Aorta (tissue), 5 donors: ENCODE measurements at regions of chr1 and their contacts with region 1.

Region 1: GRCh38 chr1:156456622-156457465 is 43.7 kb downstream of the MEF2D start:
- DNase-seq: peak; percentile 99
- ATAC-seq: peak; percentile 96
- H3K4me3 ChIP-seq: peak overlapping the region; percentile 1 to 41
- H3K27ac ChIP-seq: peak overlapping the region; percentile 93 to 94
- H3K4me1 ChIP-seq: no peaks in the 10 kb centered on the region
- H3K27me3 ChIP-seq: no peaks in the 10 kb centered on the region

Region 2: DNA sequence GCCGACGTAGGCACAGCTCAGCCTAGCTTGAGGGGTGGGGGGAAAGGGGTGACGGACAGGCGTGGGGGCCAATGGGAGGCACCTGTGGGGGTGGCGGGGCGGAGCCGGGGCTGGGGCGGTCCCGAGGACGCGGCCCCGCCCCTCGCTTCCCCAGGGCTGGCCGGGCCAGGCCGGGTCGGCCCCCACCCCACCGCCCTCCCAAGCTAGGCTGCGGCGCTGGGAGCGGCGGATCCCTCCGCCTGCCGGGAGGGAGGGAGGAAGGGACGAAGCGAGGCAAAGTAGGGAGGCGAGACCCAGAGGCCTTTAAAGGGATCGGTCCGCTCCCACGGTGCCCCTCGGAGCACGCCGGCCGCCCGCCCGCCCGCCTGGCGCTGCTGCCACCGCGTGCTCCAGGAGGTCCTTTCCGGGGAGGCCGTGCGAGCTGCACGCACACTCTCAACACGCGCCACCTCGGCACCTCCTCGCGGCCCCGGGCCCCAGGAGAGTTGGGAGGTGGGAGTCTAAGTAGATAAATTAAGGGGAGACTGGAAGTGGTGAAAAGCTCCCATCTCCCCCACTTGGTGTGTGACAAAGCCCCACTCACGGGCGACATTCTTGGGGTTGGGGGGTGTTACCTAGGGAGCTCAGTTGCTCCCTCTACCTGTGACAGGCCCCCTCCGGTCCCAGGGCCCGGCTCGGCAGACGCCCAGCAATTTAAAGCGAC is 44.1 kb after region 1 on chr1:
- intact Hi-C with region 1: loop called (anchors 2 to 5 kb)
- DNase-seq: peak; percentile 96 to 98
- ATAC-seq: peak; percentile 92
- H3K4me3 ChIP-seq: peak overlapping the region; percentile 49 to 73
- H3K27ac ChIP-seq: peak overlapping the region; percentile 96 to 98
- H3K4me1 ChIP-seq: peaks cover 3 to 10% of the 10 kb centered on the region in 2 donors
- H3K27me3 ChIP-seq: no peaks in the 10 kb centered on the region

Region 3: GRCh38 chr1:156608036-156608674 is 151.3 kb after region 1 on chr1:
- intact Hi-C with region 1: loop called (anchors 2 kb)
- DNase-seq: peak in 1 of 2 donors; percentile 40
- ATAC-seq: peak; percentile 87
- H3K4me3 ChIP-seq: no peak overlapping the region
- H3K27ac ChIP-seq: no peak overlapping the region
- H3K4me1 ChIP-seq: no peaks in the 10 kb centered on the region
- H3K27me3 ChIP-seq: no peaks in the 10 kb centered on the region